GM12878 (cell line): ENCODE measurements at regions of chr19 and their contacts with region 1.

Region 1: GRCh38 chr19:5803752-5804515 is 933 bp upstream of the NRTN start:
- DNase-seq: peak; percentile 39
- ATAC-seq: peak; percentile 99
- H3K4me3 ChIP-seq: peak overlapping the region; percentile 6; the same call in 1 of the 2 replicates
- H3K27ac ChIP-seq: no peak overlapping the region
- H3K4me1 ChIP-seq: peaks cover 7% of the 10 kb centered on the region
- H3K27me3 ChIP-seq: no peaks in the 10 kb centered on the region; a peak in 2 of 4 replicates
- CTCF ChIP-seq: peak; percentile 92 to 99 (median 98); a peak in 5 of 6 replicates
- EP300 ChIP-seq: no peak; a peak in 1 of 4 replicates
- POLR2A ChIP-seq: no peak
- RAD21 ChIP-seq: peak; percentile 82

Region 2: DNA sequence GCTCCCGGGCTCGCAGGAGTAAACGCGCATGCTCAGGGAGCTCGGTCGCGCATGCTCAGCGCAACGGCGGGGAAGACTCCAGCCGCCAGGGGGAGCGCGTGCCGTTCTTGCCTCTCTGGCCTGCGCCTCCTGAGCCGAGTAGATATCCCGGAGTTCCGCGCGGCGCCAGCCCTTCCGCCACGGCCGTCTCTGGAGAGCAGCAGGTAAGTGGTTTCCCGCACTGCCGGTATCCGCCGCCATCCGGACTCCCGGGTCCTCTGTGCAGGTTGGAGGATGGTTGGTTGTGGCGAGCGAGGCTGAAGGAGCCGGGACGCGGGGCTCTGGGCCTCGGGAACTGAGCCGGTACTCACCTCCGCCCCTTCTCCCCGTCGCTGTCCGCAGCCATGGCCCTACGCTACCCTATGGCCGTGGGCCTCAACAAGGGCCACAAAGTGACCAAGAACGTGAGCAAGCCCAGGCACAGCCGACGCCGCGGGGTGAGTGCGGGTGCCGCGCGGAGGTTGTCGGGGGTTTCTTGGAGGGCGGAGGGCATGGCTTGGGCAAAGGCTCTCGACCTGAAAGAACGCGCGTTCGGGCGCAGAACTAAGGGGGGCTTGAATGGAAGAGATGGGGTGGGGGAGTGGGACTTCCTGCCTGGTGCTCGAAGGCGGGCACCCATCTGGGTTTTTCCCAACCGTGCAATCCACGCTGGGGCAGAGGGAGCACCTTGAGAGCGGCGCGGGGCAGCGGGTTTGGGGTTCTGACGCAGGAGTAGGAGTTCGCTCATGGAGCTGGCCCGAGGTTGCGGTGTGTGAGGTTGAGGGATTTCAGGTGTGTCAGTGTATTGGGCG is 113.6 kb before region 1 on chr19 and contains the start of gene RPL36:
- CTCF ChIA-PET with region 1: interaction called, 10 read pairs
- POLR2A ChIA-PET with region 1: no interaction called
- RAD21 ChIA-PET with region 1: no interaction called
- SMC1A ChIA-PET with region 1: interaction called, 3 read pairs
- in situ Hi-C with region 1: no loop called
- intact Hi-C with region 1: no loop called
- DNase-seq: peak; percentile 94
- ATAC-seq: peak; percentile 65
- H3K4me3 ChIP-seq: peak within 1 kb of the TSS; percentile 94
- H3K27ac ChIP-seq: peak within 1 kb of the TSS; percentile 94
- H3K4me1 ChIP-seq: peaks cover 8% of the 10 kb centered on the region
- H3K27me3 ChIP-seq: no peaks in the 10 kb centered on the region
- CTCF ChIP-seq: peak; percentile 98 to 99 (median 99); a peak in 5 of 6 replicates
- EP300 ChIP-seq: no peak
- POLR2A ChIP-seq: peak; percentile 100
- RAD21 ChIP-seq: no peak
- polyA plus RNA-seq, gene RPL36: 4,698 to 4,942 TPM

Region 3: DNA sequence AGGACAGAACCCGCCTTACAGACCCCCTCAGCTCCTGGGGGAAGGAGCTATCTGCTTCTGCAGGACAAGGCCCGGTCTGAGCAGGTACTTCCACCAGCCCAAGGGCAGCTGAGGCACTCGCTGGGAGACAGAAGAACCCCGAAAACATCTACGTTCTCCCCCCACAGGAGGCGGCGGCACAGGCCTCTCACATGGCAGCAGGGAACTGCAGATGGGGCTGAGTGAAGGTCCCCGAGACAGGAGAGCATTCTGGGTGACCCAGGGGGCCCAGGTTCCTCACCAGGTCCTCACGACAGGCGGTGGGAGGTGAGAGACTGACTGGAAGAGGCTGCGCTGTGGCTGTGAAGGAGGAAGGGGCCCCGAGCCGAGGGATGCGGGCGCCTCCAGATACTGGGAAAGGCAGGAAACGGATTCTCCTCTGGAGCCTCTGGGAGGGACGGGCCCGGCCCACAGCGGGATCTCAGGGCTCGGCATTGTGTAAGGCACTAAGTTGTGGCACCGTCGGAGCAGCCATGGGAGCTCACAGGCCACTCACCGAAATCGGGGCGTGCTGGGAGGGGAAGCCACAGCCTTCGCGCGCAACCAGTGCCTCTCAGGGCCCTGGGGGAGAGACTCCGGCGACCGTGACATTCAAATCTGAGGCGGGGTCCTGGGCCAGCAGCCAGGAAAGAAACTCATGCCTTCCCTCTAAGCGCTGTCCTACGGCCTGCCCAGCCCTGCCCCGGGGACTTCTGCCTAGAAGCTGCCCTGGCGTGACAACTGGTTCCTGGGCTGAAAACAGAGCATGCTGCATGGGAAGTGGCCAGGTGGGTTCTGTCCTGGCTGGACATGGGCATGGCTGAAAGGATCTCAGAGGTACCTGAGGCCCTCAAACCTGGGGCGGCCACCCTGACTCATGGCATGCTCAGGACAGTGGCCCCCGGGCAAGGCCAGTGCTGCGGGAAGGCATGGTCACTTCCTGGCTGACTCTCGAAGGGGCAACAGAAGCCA is 99.8 kb before region 1 on chr19:
- CTCF ChIA-PET with region 1: no interaction called
- POLR2A ChIA-PET with region 1: no interaction called
- RAD21 ChIA-PET with region 1: no interaction called
- SMC1A ChIA-PET with region 1: no interaction called
- in situ Hi-C with region 1: no loop called
- intact Hi-C with region 1: no loop called
- DNase-seq: no peak
- ATAC-seq: no peak
- H3K4me3 ChIP-seq: no peak overlapping the region
- H3K27ac ChIP-seq: no peak overlapping the region
- H3K4me1 ChIP-seq: no peaks in the 10 kb centered on the region
- H3K27me3 ChIP-seq: no peaks in the 10 kb centered on the region
- CTCF ChIP-seq: no peak
- EP300 ChIP-seq: no peak
- POLR2A ChIP-seq: no peak
- RAD21 ChIP-seq: no peak

Region 4: DNA sequence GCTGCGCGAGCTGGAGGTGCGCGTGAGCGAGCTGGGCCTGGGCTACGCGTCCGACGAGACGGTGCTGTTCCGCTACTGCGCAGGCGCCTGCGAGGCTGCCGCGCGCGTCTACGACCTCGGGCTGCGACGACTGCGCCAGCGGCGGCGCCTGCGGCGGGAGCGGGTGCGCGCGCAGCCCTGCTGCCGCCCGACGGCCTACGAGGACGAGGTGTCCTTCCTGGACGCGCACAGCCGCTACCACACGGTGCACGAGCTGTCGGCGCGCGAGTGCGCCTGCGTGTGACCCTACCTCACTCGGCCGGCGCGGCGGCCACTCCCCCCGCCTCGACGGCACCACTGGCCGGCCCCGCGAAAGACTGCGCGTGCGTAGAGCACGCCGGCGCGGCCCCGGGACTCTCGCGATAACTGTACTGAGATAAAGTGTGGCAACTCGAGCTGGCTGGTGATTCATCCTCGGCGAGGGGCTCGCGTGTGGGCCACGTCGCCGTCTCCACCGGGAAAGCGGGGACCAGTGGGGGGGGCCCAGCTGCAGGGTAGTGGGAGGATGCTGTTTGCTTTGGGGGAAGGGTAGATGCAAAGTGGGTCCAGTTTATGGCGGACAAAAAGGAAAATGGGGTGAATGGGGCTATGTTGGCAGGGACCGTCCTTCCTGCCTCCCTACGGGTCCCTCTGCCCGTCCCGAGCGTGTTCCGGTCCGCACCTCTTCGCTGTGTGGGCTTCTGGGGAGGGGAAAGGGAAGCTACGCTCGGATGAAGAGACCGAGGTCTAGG is 24.1 kb after region 1 on chr19:
- CTCF ChIA-PET with region 1: interaction called, 10 read pairs
- POLR2A ChIA-PET with region 1: no interaction called
- RAD21 ChIA-PET with region 1: no interaction called
- SMC1A ChIA-PET with region 1: interaction called, 6 read pairs
- in situ Hi-C with region 1: no loop called
- intact Hi-C with region 1: no loop called
- DNase-seq: peak; percentile 38
- ATAC-seq: peak; percentile 74
- H3K4me3 ChIP-seq: peak overlapping the region; percentile 63
- H3K27ac ChIP-seq: peak overlapping the region; percentile 70; the same call in 1 of the 2 replicates
- H3K4me1 ChIP-seq: peaks cover 24% of the 10 kb centered on the region
- H3K27me3 ChIP-seq: peaks cover 0 to 4% of the 10 kb centered on the region in 2 experiments; a peak in 2 of 4 replicates
- CTCF ChIP-seq: no peak
- EP300 ChIP-seq: no peak
- POLR2A ChIP-seq: peak; percentile 99
- RAD21 ChIP-seq: no peak

Region 5: GRCh38 chr19:5904352-5905113 is 100.6 kb after region 1 on chr19 and contains the start of gene VMAC:
- CTCF ChIA-PET with region 1: interaction called, 17 read pairs
- POLR2A ChIA-PET with region 1: interaction called, 4 read pairs
- RAD21 ChIA-PET with region 1: interaction called, 15 read pairs
- SMC1A ChIA-PET with region 1: interaction called, 13 read pairs
- in situ Hi-C with region 1: no loop called
- intact Hi-C with region 1: no loop called
- DNase-seq: peak; percentile 100
- ATAC-seq: peak; percentile 90
- H3K4me3 ChIP-seq: peak within 1 kb of the TSS; percentile 95
- H3K27ac ChIP-seq: peak within 1 kb of the TSS; percentile 88
- H3K4me1 ChIP-seq: peaks cover 9% of the 10 kb centered on the region
- H3K27me3 ChIP-seq: no peaks in the 10 kb centered on the region
- CTCF ChIP-seq: no peak
- EP300 ChIP-seq: no peak
- POLR2A ChIP-seq: peak; percentile 92
- RAD21 ChIP-seq: no peak
- polyA plus RNA-seq, gene VMAC: 0.18 to 0.27 TPM

Region 6: GRCh38 chr19:5914921-5915781 is 111.2 kb after region 1 on chr19:
- CTCF ChIA-PET with region 1: no interaction called
- POLR2A ChIA-PET with region 1: no interaction called
- RAD21 ChIA-PET with region 1: no interaction called
- SMC1A ChIA-PET with region 1: no interaction called
- in situ Hi-C with region 1: no loop called
- intact Hi-C with region 1: no loop called
- DNase-seq: no peak
- ATAC-seq: no peak
- H3K4me3 ChIP-seq: no peak overlapping the region
- H3K27ac ChIP-seq: no peak overlapping the region
- H3K4me1 ChIP-seq: no peaks in the 10 kb centered on the region
- H3K27me3 ChIP-seq: no peaks in the 10 kb centered on the region
- CTCF ChIP-seq: no peak
- EP300 ChIP-seq: no peak
- POLR2A ChIP-seq: peak; percentile 42; the same call in 1 of the 2 replicates
- RAD21 ChIP-seq: no peak

Region 7: DNA sequence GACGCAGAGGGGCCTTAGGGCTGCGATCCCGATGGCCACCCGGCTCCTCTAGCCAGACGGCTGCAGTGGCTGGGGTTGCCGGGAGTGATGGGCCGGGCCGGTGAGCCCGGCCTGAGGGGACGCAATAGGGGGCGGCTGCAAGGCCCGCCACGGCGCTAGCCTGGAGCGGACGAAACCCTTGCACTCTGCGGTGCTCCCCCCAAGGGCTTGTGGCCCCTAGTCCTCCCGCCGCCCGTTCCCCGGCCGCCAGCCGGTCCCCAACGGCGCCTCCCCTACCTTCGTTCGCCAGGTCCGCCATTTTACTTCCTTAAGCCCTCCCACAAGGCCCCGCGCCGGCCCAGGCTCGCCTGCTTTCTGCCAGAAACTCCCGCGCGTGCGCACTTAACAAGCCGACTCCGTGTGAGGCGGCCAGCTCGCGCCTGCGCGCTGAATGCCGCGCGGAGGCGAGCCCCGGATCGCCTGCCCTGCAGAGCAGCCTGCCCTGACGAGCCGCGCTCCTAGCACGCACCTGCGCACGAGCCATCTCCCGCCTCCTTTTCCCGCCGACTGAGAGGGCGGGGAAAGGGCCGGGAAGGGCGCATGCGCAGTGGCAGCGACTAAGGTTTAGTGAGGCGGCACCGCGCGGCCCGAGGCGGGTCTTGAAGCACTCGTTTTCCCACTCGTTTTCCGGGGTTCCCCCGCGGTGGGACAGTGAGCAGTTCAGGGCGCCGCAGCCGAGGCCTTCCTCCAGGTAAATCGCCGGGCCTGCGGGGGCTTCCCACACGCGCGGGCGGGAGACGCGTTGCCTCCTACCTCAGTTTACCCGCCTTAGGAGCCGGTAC is 174.1 kb after region 1 on chr19 and contains the start of gene RANBP3:
- CTCF ChIA-PET with region 1: interaction called, 16 read pairs
- POLR2A ChIA-PET with region 1: no interaction called
- RAD21 ChIA-PET with region 1: interaction called, 7 read pairs
- SMC1A ChIA-PET with region 1: interaction called, 5 read pairs
- in situ Hi-C with region 1: no loop called
- intact Hi-C with region 1: no loop called
- DNase-seq: peak; percentile 96
- ATAC-seq: peak; percentile 94
- H3K4me3 ChIP-seq: peak within 1 kb of the TSS; percentile 96
- H3K27ac ChIP-seq: peak within 1 kb of the TSS; percentile 88
- H3K4me1 ChIP-seq: peaks cover 21% of the 10 kb centered on the region
- H3K27me3 ChIP-seq: no peaks in the 10 kb centered on the region
- CTCF ChIP-seq: no peak
- EP300 ChIP-seq: no peak
- POLR2A ChIP-seq: peak; percentile 88
- RAD21 ChIP-seq: no peak
- polyA plus RNA-seq, gene RANBP3: 1.1 to 1.2 TPM

Region 8: DNA sequence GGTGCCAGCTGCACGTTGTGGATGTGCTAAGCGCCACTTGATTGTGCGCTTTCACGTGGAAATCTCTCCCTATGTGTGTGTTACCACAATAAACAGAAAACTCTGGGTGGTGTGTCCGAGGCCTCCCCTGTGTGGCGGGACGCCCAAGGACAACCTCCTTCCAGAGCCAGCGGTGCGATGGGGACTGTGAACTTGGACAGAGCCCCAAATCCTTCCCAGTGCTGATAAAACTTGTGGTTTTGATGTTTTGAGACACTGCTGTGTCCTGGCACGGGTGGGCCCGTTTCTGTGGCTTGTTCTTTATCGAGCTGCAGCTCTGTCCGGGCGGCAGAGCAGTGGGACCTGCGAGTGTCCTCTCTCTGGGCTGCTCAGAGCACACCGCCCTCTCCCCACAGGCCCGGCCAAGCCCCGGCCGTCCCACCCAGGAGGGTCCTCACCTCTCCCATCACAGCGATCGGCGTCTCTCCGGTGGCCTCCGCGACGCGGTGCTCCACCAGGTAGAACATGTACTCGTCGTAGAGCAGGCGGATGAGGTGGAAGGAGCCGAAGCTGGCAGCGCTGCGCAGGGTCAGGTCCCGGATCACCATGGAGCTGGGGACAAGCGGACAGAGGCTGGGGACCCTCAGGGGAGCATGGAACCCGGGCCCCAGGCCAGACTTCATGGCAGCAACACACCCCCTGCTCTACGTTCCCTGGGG is 192.8 kb after region 1 on chr19:
- CTCF ChIA-PET with region 1: no interaction called
- POLR2A ChIA-PET with region 1: no interaction called
- RAD21 ChIA-PET with region 1: no interaction called
- SMC1A ChIA-PET with region 1: no interaction called
- in situ Hi-C with region 1: no loop called
- intact Hi-C with region 1: no loop called
- DNase-seq: no peak
- ATAC-seq: no peak
- H3K4me3 ChIP-seq: no peak overlapping the region
- H3K27ac ChIP-seq: no peak overlapping the region
- H3K4me1 ChIP-seq: no peaks in the 10 kb centered on the region
- H3K27me3 ChIP-seq: no peaks in the 10 kb centered on the region
- CTCF ChIP-seq: no peak
- EP300 ChIP-seq: no peak
- POLR2A ChIP-seq: no peak
- RAD21 ChIP-seq: no peak

Region 9: DNA sequence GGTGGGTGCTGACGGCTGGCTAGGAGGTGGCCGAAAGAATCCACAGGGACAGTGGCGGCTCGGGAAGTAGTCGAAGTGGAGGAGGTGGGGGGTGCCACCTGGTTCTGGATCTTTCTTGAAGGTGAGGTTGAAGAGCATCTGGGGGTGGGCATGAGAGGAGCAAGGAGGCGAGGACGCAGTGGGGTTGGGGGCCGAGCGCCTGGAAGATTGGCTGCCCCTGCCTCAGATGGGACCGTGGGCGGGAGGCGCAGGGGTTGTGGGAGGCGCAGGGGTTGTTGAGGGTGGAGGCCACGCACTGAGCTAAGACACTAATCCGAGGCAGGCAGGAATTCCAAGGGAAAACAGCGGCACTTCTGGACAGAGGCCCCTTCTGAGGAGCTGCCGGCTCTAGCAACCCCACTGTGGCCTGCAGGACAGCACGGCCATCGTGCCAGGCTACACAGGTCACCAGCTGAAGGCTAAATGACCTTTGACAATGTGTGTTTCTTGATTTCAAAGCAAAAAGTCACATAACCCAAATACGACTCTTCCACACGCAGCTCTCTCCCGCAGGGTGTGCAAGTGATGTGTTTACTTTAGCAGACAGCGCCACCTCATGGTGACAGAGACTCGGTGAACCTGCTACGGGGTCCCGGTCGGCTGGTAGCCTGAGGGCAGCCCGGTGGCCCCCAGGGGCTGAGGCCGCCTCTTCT is 218.1 kb after region 1 on chr19:
- CTCF ChIA-PET with region 1: interaction called, 45 read pairs
- POLR2A ChIA-PET with region 1: interaction called, 3 read pairs
- RAD21 ChIA-PET with region 1: interaction called, 11 read pairs
- SMC1A ChIA-PET with region 1: interaction called, 12 read pairs
- in situ Hi-C with region 1: loop called (anchors 5 kb)
- intact Hi-C with region 1: loop called (anchors 10 kb)
- DNase-seq: peak; percentile 17
- ATAC-seq: peak; percentile 99
- H3K4me3 ChIP-seq: no peak overlapping the region
- H3K27ac ChIP-seq: no peak overlapping the region
- H3K4me1 ChIP-seq: no peaks in the 10 kb centered on the region
- H3K27me3 ChIP-seq: 0 out of 4 replicates have a peak, but pooled peaks cover 0 to 2% of the 10 kb centered on the region in 2 experiments
- CTCF ChIP-seq: peak; percentile 69 to 87 (median 71)
- EP300 ChIP-seq: no peak
- POLR2A ChIP-seq: no peak
- RAD21 ChIP-seq: peak; percentile 82